B cell (primary cell): ENCODE measurements at regions of chr12 and their contacts with region 1.

Region 1: GRCh38 chr12:51326762-51327439 is 2.9 kb upstream of the BIN2 start:
- DNase-seq: peak; percentile 73
- ATAC-seq: peak; percentile 28
- H3K4me3 ChIP-seq: peak overlapping the region in 1 of 5 experiments; percentile 22
- H3K4me3 Mint-ChIP-seq: peak overlapping the region; percentile 35
- H3K27ac ChIP-seq: peak overlapping the region; percentile 59 to 64
- H3K27ac Mint-ChIP-seq: peak overlapping the region; percentile 83
- H3K4me1 ChIP-seq: peaks cover 72 to 79% of the 10 kb centered on the region in 2 donors
- H3K4me1 Mint-ChIP-seq: peaks cover 80% of the 10 kb centered on the region
- H3K27me3 ChIP-seq: no peaks in the 10 kb centered on the region
- H3K27me3 Mint-ChIP-seq: no peaks in the 10 kb centered on the region
- CTCF ChIP-seq: no peak

Region 2: GRCh38 chr12:50825372-50825838 is 501.5 kb before region 1 on chr12:
- CTCF ChIA-PET with region 1: no interaction called
- POLR2A ChIA-PET with region 1: no interaction called
- intact Hi-C with region 1: no loop called
- DNase-seq: peak; percentile 76
- ATAC-seq: peak; percentile 73
- H3K4me3 ChIP-seq: no peak overlapping the region
- H3K4me3 Mint-ChIP-seq: peak overlapping the region; percentile 27
- H3K27ac ChIP-seq: peak overlapping the region; percentile 2 to 72
- H3K27ac Mint-ChIP-seq: peak overlapping the region; percentile 62
- H3K4me1 ChIP-seq: peaks cover 3% of the 10 kb centered on the region in 2 donors
- H3K4me1 Mint-ChIP-seq: peaks cover 6% of the 10 kb centered on the region
- H3K27me3 ChIP-seq: no peaks in the 10 kb centered on the region
- H3K27me3 Mint-ChIP-seq: no peaks in the 10 kb centered on the region
- CTCF ChIP-seq: peak; percentile 76

Region 3: DNA sequence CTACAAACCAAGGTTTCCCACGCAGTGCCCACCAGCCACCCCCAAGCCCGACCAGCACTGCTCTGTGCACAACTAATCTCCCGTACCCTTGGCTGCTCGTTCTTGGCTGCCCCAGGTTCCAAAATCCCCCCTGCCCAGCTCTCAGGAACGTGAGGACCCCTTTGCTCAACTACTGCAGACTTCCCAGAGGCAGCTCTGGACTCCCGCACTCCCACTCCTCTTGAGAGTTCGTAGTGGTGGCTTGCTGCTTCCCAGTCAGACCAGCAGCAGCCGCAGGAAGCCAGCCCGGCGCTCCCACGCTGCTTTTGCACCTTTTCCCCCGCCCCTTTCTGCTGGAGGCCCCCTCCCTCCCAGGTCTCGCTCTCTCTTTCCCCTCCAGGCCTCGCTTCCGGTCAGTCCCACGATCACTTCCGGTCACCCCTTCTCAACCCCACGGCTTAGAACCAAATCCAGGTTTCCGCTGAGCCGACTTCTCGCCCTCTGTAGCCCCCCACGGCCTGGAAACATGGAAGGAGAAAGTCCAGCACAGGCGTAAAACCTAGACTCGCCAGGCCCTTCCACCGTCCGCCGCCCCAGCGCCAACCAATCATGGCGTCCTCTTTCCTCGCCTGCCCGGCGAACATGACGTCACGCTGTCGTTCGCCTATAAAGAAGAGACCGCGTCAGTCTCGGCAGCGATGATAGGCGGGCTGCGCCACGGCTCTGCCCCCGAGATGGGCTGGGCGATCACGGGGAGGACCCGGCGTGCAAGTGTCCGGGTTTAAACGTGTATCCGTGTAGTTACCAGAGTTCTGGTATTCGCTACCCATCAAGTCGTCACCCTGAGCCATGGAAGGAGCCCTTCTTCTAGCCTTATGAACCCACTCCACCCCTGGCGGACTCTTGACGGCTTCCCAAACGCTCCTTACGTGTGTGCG is 154.1 kb before region 1 on chr12 and contains the start of gene TFCP2:
- CTCF ChIA-PET with region 1: no interaction called
- POLR2A ChIA-PET with region 1: no interaction called
- intact Hi-C with region 1: loop called (anchors 5 kb)
- DNase-seq: peak; percentile 97
- ATAC-seq: peak; percentile 99
- H3K4me3 ChIP-seq: peak within 1 kb of the TSS; percentile 75 to 100 (median 88)
- H3K4me3 Mint-ChIP-seq: peak within 1 kb of the TSS; percentile 83
- H3K27ac ChIP-seq: peak within 1 kb of the TSS; percentile 85 to 96
- H3K27ac Mint-ChIP-seq: peak within 1 kb of the TSS; percentile 77
- H3K4me1 ChIP-seq: peaks cover 16 to 19% of the 10 kb centered on the region in 2 donors
- H3K4me1 Mint-ChIP-seq: peaks cover 15% of the 10 kb centered on the region
- H3K27me3 ChIP-seq: no peaks in the 10 kb centered on the region
- H3K27me3 Mint-ChIP-seq: no peaks in the 10 kb centered on the region
- CTCF ChIP-seq: no peak
- total RNA-seq, gene TFCP2: 37.0 and 38.8 TPM in 2 replicates

Region 4: GRCh38 chr12:51270067-51270970 is 56.6 kb before region 1 on chr12 and contains the start of gene SMAGP:
- CTCF ChIA-PET with region 1: interaction called, 6 read pairs
- POLR2A ChIA-PET with region 1: interaction called, 4 read pairs
- intact Hi-C with region 1: loop called (anchors 2 kb)
- DNase-seq: peak; percentile 79
- ATAC-seq: peak; percentile 75
- H3K4me3 ChIP-seq: peak within 1 kb of the TSS; percentile 52 to 86 (median 74)
- H3K4me3 Mint-ChIP-seq: peak within 1 kb of the TSS; percentile 95
- H3K27ac ChIP-seq: peak within 1 kb of the TSS; percentile 12 to 64
- H3K27ac Mint-ChIP-seq: peak within 1 kb of the TSS; percentile 91
- H3K4me1 ChIP-seq: peaks cover 19 to 20% of the 10 kb centered on the region in 2 donors
- H3K4me1 Mint-ChIP-seq: peaks cover 31% of the 10 kb centered on the region
- H3K27me3 ChIP-seq: no peaks in the 10 kb centered on the region
- H3K27me3 Mint-ChIP-seq: no peaks in the 10 kb centered on the region
- CTCF ChIP-seq: no peak
- total RNA-seq, gene SMAGP: 8.0 and 10.4 TPM in 2 replicates